ENCODE measurements at regions of chr20 and their contacts with region 1.

Region 1: GRCh38 chr20:32762149-32762753 is at the start of gene DNMT3B:
- DNase-seq: peak; percentile 79
- H3K4me3 ChIP-seq: peak within 1 kb of the TSS; percentile 73 to 92 (median 88)
- H3K27ac ChIP-seq: no peak within 1 kb of the TSS
- H3K4me1 ChIP-seq: peaks cover 14% of the 10 kb centered on the region
- H3K27me3 ChIP-seq: no peaks in the 10 kb centered on the region
- CTCF ChIP-seq: peak; percentile 14 to 23
- POLR2A ChIP-seq: no peak
- total RNA-seq, gene DNMT3B: 6.8 TPM in 2 replicates

Region 2: GRCh38 chr20:32451682-32452462 is 310.4 kb before region 1 on chr20:
- CTCF ChIA-PET with region 1: no interaction called
- POLR2A ChIA-PET with region 1: no interaction called
- dilution Hi-C with region 1: no loop called
- intact Hi-C with region 1: no loop called
- DNase-seq: no peak
- H3K4me3 ChIP-seq: no peak overlapping the region
- H3K27ac ChIP-seq: no peak overlapping the region
- H3K4me1 ChIP-seq: peaks cover 8% of the 10 kb centered on the region
- H3K27me3 ChIP-seq: no peaks in the 10 kb centered on the region
- CTCF ChIP-seq: no peak
- POLR2A ChIP-seq: no peak

Region 3: GRCh38 chr20:32674362-32674789 is 87.9 kb before region 1 on chr20:
- CTCF ChIA-PET with region 1: interaction called, 33 read pairs
- POLR2A ChIA-PET with region 1: no interaction called
- dilution Hi-C with region 1: no loop called
- intact Hi-C with region 1: loop called (anchors 1 kb)
- DNase-seq: peak; percentile 69
- H3K4me3 ChIP-seq: no peak overlapping the region
- H3K27ac ChIP-seq: no peak overlapping the region
- H3K4me1 ChIP-seq: no peaks in the 10 kb centered on the region
- H3K27me3 ChIP-seq: no peaks in the 10 kb centered on the region
- CTCF ChIP-seq: peak; percentile 76 to 87
- POLR2A ChIP-seq: no peak

Region 4: DNA sequence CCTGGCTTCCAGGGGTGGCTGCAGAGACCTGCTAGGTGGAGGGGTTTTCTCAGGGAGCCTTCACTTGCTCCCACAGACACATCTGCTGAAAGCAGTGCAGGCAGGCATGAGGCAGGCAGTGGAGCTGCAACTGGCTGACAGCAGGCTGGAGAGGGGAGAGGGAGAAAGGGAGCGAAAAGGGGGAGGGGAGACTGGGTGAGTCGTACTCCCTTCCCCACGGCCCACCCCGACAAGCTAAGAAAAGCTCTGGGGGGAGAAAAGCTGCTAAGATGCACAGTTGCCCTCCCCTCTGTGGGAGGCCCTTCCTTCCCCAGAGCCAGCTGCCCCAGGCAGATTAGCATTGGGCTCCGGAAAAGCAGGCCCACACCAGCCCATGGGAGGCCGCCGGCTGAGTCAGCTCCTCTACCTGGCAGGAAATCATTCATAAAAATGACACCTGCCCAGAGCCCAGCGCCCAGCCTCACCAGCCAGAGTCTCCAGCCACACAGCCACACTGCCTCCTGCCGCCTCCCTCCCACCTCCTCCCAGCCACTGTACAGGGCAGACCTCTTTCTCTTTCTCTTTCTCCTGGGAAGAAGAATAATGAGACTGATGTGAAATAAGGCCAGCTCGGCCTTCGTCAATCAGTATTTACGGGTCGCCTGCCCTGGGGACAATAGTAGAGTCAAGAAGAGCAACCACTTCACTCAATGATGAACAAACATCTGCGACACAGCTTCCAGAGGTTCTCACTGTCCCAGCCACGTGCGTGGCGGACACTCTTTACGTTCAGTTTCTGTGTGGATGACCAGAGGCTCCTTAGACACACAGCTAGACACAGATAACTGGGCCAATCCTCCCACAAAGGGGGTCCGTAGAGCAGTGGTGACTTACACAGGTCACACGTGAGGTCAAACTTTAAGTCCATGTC is 80.8 kb before region 1 on chr20:
- CTCF ChIA-PET with region 1: interaction called, 12 read pairs
- POLR2A ChIA-PET with region 1: no interaction called
- dilution Hi-C with region 1: no loop called
- intact Hi-C with region 1: no loop called
- DNase-seq: peak; percentile 76
- H3K4me3 ChIP-seq: no peak overlapping the region
- H3K27ac ChIP-seq: no peak overlapping the region
- H3K4me1 ChIP-seq: peaks cover 11% of the 10 kb centered on the region
- H3K27me3 ChIP-seq: no peaks in the 10 kb centered on the region
- CTCF ChIP-seq: no peak
- POLR2A ChIP-seq: no peak

Region 5: DNA sequence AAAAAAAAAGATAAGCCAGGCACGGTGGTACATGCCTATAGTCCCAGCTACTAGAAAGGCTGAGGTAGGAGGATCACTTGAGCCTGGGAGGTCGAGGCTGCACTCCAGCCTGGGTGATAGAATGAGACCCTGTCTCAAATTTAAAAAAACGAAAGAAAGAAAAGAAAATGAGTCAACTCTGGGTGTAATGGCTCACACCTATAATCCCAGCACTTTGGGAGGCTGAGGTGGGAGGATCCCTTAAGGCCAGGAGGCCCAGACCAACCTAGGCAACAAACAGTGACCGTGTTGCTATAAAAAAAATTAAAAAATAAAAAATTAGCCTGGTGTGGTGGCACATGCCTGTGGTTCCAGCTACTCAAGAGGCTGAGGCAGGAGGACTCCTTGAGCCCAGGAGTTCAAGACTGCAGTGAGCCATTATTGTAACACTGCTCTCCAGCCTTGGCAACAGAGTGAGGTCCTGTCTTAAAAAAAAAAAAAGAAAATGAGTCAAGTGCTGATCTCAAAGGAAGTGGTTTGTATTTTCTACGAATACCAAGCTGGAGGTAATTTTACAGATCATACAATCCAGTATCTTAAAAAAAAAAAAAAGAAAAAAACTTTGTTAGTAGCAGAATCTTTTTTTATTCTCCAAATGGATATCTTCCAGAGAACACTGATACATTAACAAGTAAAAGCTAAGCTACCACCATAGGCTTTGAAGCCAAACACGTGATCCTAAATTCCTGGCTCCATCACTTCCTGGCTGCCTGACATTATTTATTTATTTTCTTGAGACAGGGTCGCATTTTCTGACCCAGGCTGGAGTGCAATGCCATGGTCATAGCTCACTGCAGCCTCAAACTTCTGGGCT is 24.7 kb before region 1 on chr20:
- CTCF ChIA-PET with region 1: interaction called, 16 read pairs
- POLR2A ChIA-PET with region 1: no interaction called
- dilution Hi-C with region 1: no loop called
- intact Hi-C with region 1: no loop called
- DNase-seq: peak; percentile 67
- H3K4me3 ChIP-seq: no peak overlapping the region
- H3K27ac ChIP-seq: peak overlapping the region; percentile 76
- H3K4me1 ChIP-seq: peaks cover 9% of the 10 kb centered on the region
- H3K27me3 ChIP-seq: no peaks in the 10 kb centered on the region
- CTCF ChIP-seq: no peak
- POLR2A ChIP-seq: no peak

Region 6: DNA sequence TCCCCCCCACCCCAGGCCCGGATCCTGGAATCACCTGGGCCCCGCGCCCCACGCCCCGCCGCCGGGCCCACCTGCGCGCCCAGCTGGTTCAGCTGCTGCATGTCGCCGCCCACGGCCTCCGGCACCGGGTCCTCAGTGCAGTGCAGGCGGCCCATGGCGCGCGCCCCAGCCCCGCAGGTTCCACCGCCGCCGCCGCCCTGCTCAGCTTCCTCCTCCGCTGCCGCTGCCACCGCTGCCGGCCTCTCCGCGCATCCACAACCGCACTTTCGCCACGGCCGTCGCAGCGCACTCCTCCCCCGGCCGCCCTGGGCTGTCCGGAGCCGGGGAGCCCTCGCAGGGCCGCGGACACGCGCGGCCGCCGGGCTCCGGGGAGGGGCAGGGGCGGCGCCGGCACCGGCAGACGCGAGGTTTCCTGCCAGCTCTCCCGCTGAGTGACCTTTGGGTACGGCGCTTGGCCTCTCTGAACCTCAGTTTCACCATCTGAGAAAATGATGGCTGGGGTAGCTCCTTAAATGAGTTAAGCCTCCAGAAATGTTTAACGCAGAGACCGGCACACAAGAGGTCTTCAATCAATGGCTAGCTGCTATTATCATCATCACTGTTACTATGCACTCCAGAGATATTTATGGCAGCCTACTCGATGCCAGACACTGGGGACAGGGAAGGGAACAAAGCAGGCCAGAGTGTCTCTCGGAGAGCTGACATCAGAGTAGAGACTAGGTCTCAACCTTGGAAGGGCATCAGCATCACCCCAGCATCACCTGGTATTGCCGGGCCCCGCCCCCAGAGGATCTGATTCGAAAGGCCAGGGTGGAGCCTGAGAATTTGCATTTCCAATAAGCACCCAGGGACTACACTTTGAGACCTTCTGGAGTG is 18.8 kb before region 1 on chr20 and contains the start of gene COMMD7:
- CTCF ChIA-PET with region 1: interaction called, 16 read pairs
- POLR2A ChIA-PET with region 1: interaction called, 5 read pairs
- dilution Hi-C with region 1: no loop called
- intact Hi-C with region 1: loop called (anchors 1 kb)
- DNase-seq: peak; percentile 57
- H3K4me3 ChIP-seq: peak within 1 kb of the TSS; percentile 73 to 90 (median 87)
- H3K27ac ChIP-seq: peak within 1 kb of the TSS; percentile 81
- H3K4me1 ChIP-seq: peaks cover 9% of the 10 kb centered on the region
- H3K27me3 ChIP-seq: no peaks in the 10 kb centered on the region
- CTCF ChIP-seq: no peak
- POLR2A ChIP-seq: no peak
- total RNA-seq, gene COMMD7: 55.9 and 58.8 TPM in 2 replicates